ENCODE measurements at regions of chr13 and their contacts with region 1.

Region 1: DNA sequence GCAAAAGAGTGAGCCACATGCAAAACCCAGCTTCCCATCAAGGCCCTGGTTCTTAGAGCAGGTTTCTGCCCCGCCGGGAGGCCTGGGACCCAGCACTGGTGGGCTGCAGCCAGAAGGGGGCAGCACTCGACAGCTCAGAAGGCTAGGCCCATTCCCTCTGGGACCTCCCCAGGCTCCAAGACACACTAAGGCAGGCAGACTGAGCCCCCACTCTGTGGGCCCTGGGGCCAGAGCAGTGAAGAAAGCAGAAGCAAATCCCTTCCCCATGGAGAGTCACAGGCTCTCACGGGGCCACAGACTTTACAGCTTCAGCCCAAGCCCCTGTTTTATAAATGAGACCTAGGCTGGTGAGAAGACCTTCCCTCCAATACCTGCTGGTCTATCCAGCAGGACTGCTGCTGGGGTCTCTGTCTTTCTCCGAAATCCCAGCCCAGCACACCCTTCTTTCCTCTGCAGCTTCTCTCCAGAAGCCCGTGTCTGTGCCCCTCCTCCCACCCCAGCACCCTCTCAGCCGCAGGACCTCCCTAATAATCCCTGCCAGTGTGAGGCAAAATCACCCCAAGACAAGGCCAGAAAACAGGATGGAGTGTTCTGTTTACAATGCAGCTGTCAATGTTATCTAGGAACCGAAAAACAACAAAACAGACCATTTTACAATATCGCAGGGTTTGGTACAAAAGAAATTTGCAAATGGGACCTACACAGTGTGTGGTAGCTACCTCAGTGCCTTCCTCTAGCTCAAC is 109.3 kb downstream of the ABCC4 start:
- DNase-seq: peak; percentile 71 to 91 (median 83)
- ATAC-seq: peak; percentile 91
- H3K4me3 ChIP-seq: no peak overlapping the region
- H3K27ac ChIP-seq: no peak overlapping the region
- H3K4me1 ChIP-seq: no peaks in the 10 kb centered on the region
- H3K27me3 ChIP-seq: no peaks in the 10 kb centered on the region
- CTCF ChIP-seq: peak; percentile 83 to 90

Region 2: GRCh38 chr13:94978516-94978915 is 213.5 kb before region 1 on chr13:
- intact Hi-C with region 1: no loop called
- DNase-seq: no peak
- ATAC-seq: no peak
- H3K4me3 ChIP-seq: no peak overlapping the region
- H3K27ac ChIP-seq: no peak overlapping the region
- H3K4me1 ChIP-seq: no peaks in the 10 kb centered on the region
- H3K27me3 ChIP-seq: no peaks in the 10 kb centered on the region
- CTCF ChIP-seq: no peak

Region 3: GRCh38 chr13:95296326-95296925 is 104.4 kb after region 1 on chr13:
- intact Hi-C with region 1: loop called in 1 of 2 experiments (anchors 10 kb)
- DNase-seq: no peak
- ATAC-seq: peak; percentile 49
- H3K4me3 ChIP-seq: no peak overlapping the region
- H3K27ac ChIP-seq: no peak overlapping the region
- H3K4me1 ChIP-seq: peaks cover 0 to 39% of the 10 kb centered on the region in 2 donors
- H3K27me3 ChIP-seq: peaks cover 0 to 8% of the 10 kb centered on the region in 2 donors
- CTCF ChIP-seq: peak; percentile 50 to 52

Region 4: GRCh38 chr13:95307507-95307906 is 115.5 kb after region 1 on chr13:
- intact Hi-C with region 1: no loop called
- DNase-seq: no peak
- ATAC-seq: no peak
- H3K4me3 ChIP-seq: no peak overlapping the region
- H3K27ac ChIP-seq: no peak overlapping the region
- H3K4me1 ChIP-seq: no peaks in the 10 kb centered on the region
- H3K27me3 ChIP-seq: peaks cover 0 to 4% of the 10 kb centered on the region in 2 donors
- CTCF ChIP-seq: no peak

Region 5: GRCh38 chr13:95403828-95404522 is 212.0 kb after region 1 on chr13:
- intact Hi-C with region 1: loop called in 1 of 2 experiments (anchors 5 kb)
- DNase-seq: peak; percentile 75 to 93 (median 86)
- ATAC-seq: peak; percentile 99
- H3K4me3 ChIP-seq: peak overlapping the region; percentile 2 to 19
- H3K27ac ChIP-seq: no peak overlapping the region
- H3K4me1 ChIP-seq: peaks cover 3 to 10% of the 10 kb centered on the region in 2 donors
- H3K27me3 ChIP-seq: peaks cover 0 to 5% of the 10 kb centered on the region in 2 donors
- CTCF ChIP-seq: peak; percentile 89 to 90

Measured in left lung (tissue), 14 donors.